Esophagus muscularis mucosa (tissue), 4 donors: ENCODE measurements at regions of chr16 and their contacts with region 1.

Region 1: GRCh38 chr16:5071681-5072333 is at the start of gene ALG1:
- DNase-seq: peak; percentile 97
- H3K4me3 ChIP-seq: peak within 1 kb of the TSS; percentile 70 to 76 (median 71)
- H3K27ac ChIP-seq: peak within 1 kb of the TSS; percentile 68 to 85 (median 78)
- H3K4me1 ChIP-seq: peaks cover 5 to 23% (median 17%) of the 10 kb centered on the region in 4 donors
- H3K27me3 ChIP-seq: no peaks in the 10 kb centered on the region
- CTCF ChIP-seq: peak in 1 of 3 experiments; percentile 28
- EP300 ChIP-seq: no peak
- POLR2A ChIP-seq: peak; percentile 49
- total RNA-seq, gene ALG1: 10.4 to 15.9 (median 12.2) TPM

Region 2: DNA sequence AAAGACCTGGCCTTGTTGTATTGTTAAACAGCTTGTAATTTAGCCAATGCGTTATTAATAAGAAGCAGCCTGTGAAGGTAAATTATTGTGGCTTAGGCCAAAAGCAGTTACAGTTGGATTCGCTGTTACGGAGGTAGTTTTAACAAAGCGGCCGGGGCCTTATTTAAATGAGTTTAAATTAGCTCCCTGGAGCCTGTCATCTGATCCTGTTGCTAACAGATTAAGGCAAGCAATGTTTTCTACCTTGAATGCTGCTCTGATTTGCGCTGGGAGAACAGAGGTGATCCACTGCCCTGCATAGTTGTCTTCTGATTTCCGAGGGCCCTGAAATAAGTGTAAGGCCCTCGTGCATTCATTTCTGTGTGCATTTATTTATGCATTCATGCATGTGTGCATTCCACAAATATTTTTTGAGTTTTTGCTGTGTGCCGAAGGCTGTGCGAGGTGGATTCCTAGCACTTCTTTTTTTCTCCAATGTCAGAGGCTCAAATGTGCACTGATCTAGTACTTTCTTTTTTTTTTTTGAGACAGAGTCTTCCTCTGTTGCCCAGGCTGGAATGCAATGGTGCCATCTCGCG is 102.8 kb before region 1 on chr16:
- intact Hi-C with region 1: loop called (anchors 10 kb)
- DNase-seq: no peak
- H3K4me3 ChIP-seq: no peak overlapping the region
- H3K27ac ChIP-seq: no peak overlapping the region
- H3K4me1 ChIP-seq: no peaks in the 10 kb centered on the region
- H3K27me3 ChIP-seq: no peaks in the 10 kb centered on the region
- CTCF ChIP-seq: no peak
- EP300 ChIP-seq: no peak
- POLR2A ChIP-seq: no peak

Region 3: DNA sequence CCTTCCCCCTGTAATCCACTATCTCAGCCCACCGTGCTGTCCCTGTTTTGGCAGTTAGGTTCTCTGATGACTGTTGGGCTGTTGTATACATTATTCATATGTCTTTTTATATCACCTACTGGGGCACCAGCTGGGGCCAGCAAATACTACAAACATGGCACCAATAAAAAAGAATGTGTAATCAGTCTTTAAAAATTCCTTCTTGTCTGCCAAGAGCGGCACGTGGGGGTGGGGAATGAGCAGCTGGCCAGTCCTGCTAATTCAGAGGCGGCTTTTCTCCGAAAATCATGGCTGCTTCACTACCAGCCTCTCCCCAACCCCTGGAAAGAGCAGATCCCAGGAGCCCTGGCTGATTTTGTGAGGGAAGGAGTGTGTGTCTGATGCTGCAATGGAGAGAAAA is 103.5 kb after region 1 on chr16:
- intact Hi-C with region 1: no loop called
- DNase-seq: no peak
- H3K4me3 ChIP-seq: no peak overlapping the region
- H3K27ac ChIP-seq: no peak overlapping the region
- H3K4me1 ChIP-seq: no peaks in the 10 kb centered on the region
- H3K27me3 ChIP-seq: peaks cover 0 to 13% (median 0%) of the 10 kb centered on the region in 4 donors
- CTCF ChIP-seq: no peak
- EP300 ChIP-seq: no peak
- POLR2A ChIP-seq: no peak